ENCODE measurements at regions of chr1 and their contacts with region 1.

Region 1: DNA sequence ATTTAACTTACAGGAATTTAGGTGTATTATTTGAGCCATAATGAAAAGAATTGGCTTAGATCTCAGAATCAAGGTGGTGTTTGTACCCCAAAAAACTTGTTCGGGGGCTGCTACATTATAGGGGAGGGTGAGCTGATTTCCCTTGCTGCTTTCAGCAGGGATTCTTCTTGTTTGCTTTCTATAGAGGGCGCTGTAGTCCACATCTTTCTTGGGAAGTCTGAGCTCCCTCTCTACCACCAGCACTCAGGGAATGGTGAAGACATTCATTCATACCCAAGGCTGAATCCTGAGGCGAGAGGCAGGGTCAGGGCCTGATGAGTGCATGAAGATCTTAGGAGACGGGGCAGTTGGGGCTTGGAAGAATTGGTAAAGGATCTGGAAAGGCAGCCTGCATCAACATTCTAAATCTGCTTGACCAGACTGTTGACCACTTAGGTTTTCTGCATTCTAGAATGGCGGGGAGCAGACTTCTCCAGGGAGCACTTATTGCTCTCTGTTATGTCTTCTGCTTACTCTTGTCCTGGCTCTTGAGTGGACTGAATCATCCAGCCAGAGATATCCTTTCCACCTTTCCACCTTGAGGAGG is 18.9 kb downstream of the SPATA46 start:
- DNase-seq: peak in 1 of 2 donors; percentile 25
- ATAC-seq: peak; percentile 52 to 73 (median 55)
- H3K4me3 ChIP-seq: no peak overlapping the region
- H3K4me3 Mint-ChIP-seq: no peak overlapping the region
- H3K27ac ChIP-seq: no peak overlapping the region
- H3K27ac Mint-ChIP-seq: no peak overlapping the region
- H3K4me1 ChIP-seq: peaks cover 11% of the 10 kb centered on the region
- H3K4me1 Mint-ChIP-seq: peaks cover 0 to 10% of the 10 kb centered on the region in 2 donors
- H3K27me3 ChIP-seq: no peaks in the 10 kb centered on the region
- H3K27me3 Mint-ChIP-seq: peaks cover 2 to 6% of the 10 kb centered on the region in 2 donors
- CTCF ChIP-seq: peak; percentile 73

Region 2: GRCh38 chr1:162456324-162456723 is 98.5 kb after region 1 on chr1:
- intact Hi-C with region 1: loop called (anchors 5 kb)
- DNase-seq: no peak
- ATAC-seq: no peak
- H3K4me3 ChIP-seq: no peak overlapping the region
- H3K4me3 Mint-ChIP-seq: no peak overlapping the region
- H3K27ac ChIP-seq: no peak overlapping the region
- H3K27ac Mint-ChIP-seq: no peak overlapping the region
- H3K4me1 ChIP-seq: no peaks in the 10 kb centered on the region
- H3K4me1 Mint-ChIP-seq: no peaks in the 10 kb centered on the region
- H3K27me3 ChIP-seq: no peaks in the 10 kb centered on the region
- H3K27me3 Mint-ChIP-seq: peaks cover 0 to 3% of the 10 kb centered on the region in 2 donors
- CTCF ChIP-seq: peak; percentile 14

Region 3: GRCh38 chr1:162627662-162628296 is 270.0 kb after region 1 on chr1:
- intact Hi-C with region 1: loop called (anchors 1 kb)
- DNase-seq: peak in 1 of 2 donors; percentile 42
- ATAC-seq: peak in 2 of 3 donors; percentile 36 to 49
- H3K4me3 ChIP-seq: no peak overlapping the region
- H3K4me3 Mint-ChIP-seq: no peak overlapping the region
- H3K27ac ChIP-seq: no peak overlapping the region
- H3K27ac Mint-ChIP-seq: no peak overlapping the region
- H3K4me1 ChIP-seq: no peaks in the 10 kb centered on the region
- H3K4me1 Mint-ChIP-seq: no peaks in the 10 kb centered on the region
- H3K27me3 ChIP-seq: no peaks in the 10 kb centered on the region
- H3K27me3 Mint-ChIP-seq: peaks cover 3 to 5% of the 10 kb centered on the region in 2 donors
- CTCF ChIP-seq: peak; percentile 46

Region 4: DNA sequence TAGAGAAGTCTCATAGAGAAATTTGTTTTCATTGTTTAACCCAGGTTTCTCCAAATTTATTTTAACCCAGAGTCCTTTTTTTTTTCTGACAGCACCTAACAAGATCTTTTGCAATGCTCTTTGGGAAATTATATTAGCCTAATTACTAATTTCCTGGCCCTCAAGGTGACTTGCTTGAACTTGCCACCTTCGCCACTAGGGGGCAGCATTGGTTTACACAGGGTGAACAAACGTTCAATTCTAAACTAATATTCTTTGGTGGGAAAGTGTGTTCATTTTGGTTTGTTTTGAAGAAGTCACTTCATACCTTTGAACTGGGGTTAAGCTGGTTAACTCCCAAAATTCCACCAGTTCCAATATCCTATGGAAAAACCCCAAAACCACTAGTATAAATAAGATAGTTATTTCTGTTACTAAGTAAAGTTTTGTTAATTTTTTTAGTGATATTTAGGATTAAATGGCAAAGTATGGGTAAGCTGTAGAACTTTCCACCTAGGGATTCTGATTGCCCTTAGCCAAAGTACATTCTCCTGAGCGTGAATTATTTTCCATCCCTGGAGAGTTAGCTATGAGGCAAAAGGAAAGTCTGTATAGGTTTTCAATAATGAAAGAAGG is 490.2 kb after region 1 on chr1:
- intact Hi-C with region 1: loop called (anchors 5 kb)
- DNase-seq: peak; percentile 66 to 85
- ATAC-seq: peak; percentile 49 to 69 (median 62)
- H3K4me3 ChIP-seq: no peak overlapping the region
- H3K4me3 Mint-ChIP-seq: no peak overlapping the region
- H3K27ac ChIP-seq: no peak overlapping the region
- H3K27ac Mint-ChIP-seq: no peak overlapping the region
- H3K4me1 ChIP-seq: no peaks in the 10 kb centered on the region
- H3K4me1 Mint-ChIP-seq: no peaks in the 10 kb centered on the region
- H3K27me3 ChIP-seq: peaks cover 7% of the 10 kb centered on the region
- H3K27me3 Mint-ChIP-seq: peaks cover 11 to 18% of the 10 kb centered on the region in 2 donors
- CTCF ChIP-seq: peak; percentile 98

Region 5: GRCh38 chr1:163315773-163316374 is 958.1 kb after region 1 on chr1:
- intact Hi-C with region 1: loop called (anchors 5 kb)
- DNase-seq: peak in 1 of 2 donors; percentile 74
- ATAC-seq: no peak
- H3K4me3 ChIP-seq: no peak overlapping the region
- H3K4me3 Mint-ChIP-seq: no peak overlapping the region
- H3K27ac ChIP-seq: no peak overlapping the region
- H3K27ac Mint-ChIP-seq: no peak overlapping the region
- H3K4me1 ChIP-seq: no peaks in the 10 kb centered on the region
- H3K4me1 Mint-ChIP-seq: peaks cover 3% of the 10 kb centered on the region in 2 donors
- H3K27me3 ChIP-seq: no peaks in the 10 kb centered on the region
- H3K27me3 Mint-ChIP-seq: no peaks in the 10 kb centered on the region
- CTCF ChIP-seq: peak; percentile 81